Lower leg skin (tissue), 4 donors: ENCODE measurements at regions of chrX and their contacts with region 1.

Region 1: DNA sequence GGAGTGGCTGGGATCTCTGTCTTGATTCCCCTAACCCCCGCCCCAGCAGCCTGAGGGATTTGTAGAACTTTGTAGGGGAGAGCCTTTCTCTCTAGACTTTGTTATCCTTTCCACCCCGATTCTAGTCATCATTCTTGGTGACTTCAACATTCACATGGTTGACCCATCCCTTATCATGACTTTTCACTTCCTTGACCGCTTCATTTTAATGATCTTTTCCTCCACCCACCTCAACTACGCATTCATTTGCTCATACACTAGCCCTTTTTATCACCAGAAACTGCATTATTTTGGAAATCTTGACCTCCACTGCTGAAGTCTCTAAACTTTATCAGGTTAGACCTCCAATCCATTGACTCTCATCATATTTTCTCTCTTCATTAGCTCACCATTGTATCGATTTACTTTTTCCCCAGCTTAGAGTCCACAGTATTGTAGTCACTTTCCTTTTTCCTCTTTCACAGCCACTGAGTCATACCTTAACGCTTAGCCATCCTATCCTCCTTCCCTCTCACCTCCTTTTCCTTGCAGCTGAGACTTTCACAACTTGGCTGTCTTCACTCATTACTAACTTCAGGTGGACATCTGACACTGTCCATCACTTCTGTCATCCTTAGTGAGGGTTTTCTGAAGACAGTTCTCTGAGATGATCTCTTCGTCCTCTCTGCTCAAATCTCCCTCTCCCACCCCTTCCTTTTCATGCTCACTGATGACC is 70.3 kb upstream of the ESX1 start:
- DNase-seq: no peak
- H3K4me3 ChIP-seq: no peak overlapping the region
- CTCF ChIP-seq: no peak
- POLR2A ChIP-seq: no peak

Region 2: DNA sequence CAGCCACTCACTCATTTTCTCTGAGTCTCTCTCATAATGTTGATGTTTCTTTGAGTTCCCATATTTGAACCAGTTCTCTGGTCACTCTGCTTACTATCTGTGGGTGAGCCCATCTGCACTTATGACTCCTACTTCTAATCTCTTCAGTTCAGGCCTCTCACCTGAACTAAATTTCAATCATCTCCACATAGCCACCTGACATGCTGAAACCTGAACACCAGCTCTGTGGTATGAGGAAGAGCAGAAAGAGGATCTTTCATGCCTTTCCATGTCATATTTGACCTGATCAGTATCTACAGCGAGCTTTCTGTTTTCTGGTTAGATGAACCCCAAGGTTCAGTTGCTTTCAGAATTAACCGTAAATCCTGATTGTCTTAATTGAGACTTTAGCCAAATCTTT is 51.9 kb after region 1 on chrX:
- intact Hi-C with region 1: loop called (anchors 5 kb)
- DNase-seq: no peak
- H3K4me3 ChIP-seq: no peak overlapping the region
- CTCF ChIP-seq: no peak
- POLR2A ChIP-seq: no peak